Common myeloid progenitor, CD34-positive (primary cell): ENCODE measurements at regions of chr10 and their contacts with region 1.

Region 1: DNA sequence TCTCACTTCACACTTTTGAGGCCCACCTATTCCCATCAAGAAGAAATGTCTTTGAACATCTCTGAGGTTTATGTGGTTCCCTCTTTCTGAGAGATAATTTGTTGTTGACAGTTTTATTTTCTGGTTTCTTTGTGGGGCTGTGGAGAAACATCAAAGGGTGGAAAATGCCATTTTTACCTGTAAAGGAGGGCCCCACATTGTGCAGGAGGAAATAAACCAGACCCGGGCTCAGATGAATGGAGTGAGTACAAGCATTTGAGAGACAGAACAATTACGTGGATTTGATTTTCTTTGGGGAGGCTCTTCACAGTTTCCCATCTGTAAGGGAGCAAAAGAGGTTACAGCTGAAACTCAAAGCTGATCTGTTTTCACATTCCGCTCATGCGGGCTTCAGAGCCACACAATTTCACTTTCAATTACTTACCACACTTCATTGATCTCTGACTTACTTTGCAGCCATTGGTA is 29.8 kb downstream of the ITPRIP start:
- DNase-seq: no peak
- H3K4me3 ChIP-seq: no peak overlapping the region
- H3K27ac ChIP-seq: no peak overlapping the region
- H3K4me1 ChIP-seq: peaks cover 9 to 27% (median 20%) of the 10 kb centered on the region in 4 experiments
- H3K27me3 ChIP-seq: no peaks in the 10 kb centered on the region

Region 2: GRCh38 chr10:104291439-104291951 is 17.0 kb before region 1 on chr10:
- CTCF ChIA-PET with region 1: interaction called, 115 read pairs
- POLR2A ChIA-PET with region 1: no interaction called
- DNase-seq: peak; percentile 84 to 93 (median 91)
- H3K4me3 ChIP-seq: peak overlapping the region in 1 of 7 experiments; percentile 55
- H3K27ac ChIP-seq: no peak overlapping the region
- H3K4me1 ChIP-seq: peaks cover 0 to 17% (median 8%) of the 10 kb centered on the region in 4 experiments
- H3K27me3 ChIP-seq: no peaks in the 10 kb centered on the region

Region 3: GRCh38 chr10:104322416-104322782 is 13.9 kb after region 1 on chr10:
- CTCF ChIA-PET with region 1: interaction called, 55 read pairs
- POLR2A ChIA-PET with region 1: no interaction called
- DNase-seq: no peak
- H3K4me3 ChIP-seq: no peak overlapping the region
- H3K27ac ChIP-seq: no peak overlapping the region
- H3K4me1 ChIP-seq: peaks cover 14 to 88% (median 78%) of the 10 kb centered on the region in 4 experiments
- H3K27me3 ChIP-seq: no peaks in the 10 kb centered on the region

Region 4: GRCh38 chr10:104328896-104329710 is 20.6 kb after region 1 on chr10:
- CTCF ChIA-PET with region 1: interaction called, 27 read pairs
- POLR2A ChIA-PET with region 1: no interaction called
- DNase-seq: peak; percentile 54 to 89 (median 83)
- H3K4me3 ChIP-seq: peak overlapping the region in 6 of 7 experiments; percentile 25 to 70 (median 55)
- H3K27ac ChIP-seq: peak overlapping the region in 1 of 2 experiments; percentile 61
- H3K4me1 ChIP-seq: peaks cover 17 to 92% (median 79%) of the 10 kb centered on the region in 4 experiments
- H3K27me3 ChIP-seq: no peaks in the 10 kb centered on the region

Region 5: DNA sequence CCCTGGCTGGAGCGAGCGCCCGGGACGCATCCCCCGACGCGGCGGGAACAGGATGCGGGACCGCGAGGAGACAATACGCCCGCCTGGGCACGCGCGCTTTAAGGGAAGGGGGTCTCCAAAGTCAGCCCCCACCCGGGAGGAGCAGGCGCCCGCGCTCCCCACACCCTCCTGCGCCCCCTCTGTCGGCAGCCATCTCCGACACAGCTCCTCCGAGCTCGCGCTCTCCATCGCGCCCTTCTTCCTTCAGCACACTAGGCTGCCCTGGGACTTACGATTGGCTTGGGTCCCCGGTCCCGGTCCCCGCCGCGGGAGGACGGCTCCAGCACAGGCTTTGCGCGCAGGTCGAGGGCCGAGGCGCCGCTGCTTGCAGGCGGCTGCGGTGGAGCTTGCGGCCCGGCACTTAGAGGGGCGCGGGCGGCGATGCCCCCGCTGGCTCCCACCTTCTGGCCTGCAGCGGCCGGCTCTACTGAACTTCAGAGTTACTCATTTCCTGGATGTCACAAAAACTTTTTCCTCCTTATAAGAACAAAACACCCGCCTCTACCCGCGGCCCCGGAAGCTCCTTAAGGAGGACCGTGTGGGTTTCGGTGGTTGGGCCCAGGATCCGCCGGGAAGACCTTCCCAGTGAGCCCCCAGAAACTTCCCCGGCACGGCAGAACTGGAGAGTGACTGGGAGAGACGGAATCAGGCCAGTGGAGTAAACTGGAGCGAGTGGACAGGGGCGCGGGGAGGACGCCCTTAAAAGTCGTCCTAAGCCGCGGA is 29.7 kb after region 1 on chr10 and contains the start of gene ITPRIP:
- CTCF ChIA-PET with region 1: interaction called, 191 read pairs
- POLR2A ChIA-PET with region 1: no interaction called
- DNase-seq: peak; percentile 72 to 88 (median 81)
- H3K4me3 ChIP-seq: peak within 1 kb of the TSS; percentile 85 to 98 (median 91)
- H3K27ac ChIP-seq: peak within 1 kb of the TSS; percentile 86 to 96
- H3K4me1 ChIP-seq: peaks cover 21 to 47% (median 42%) of the 10 kb centered on the region in 4 experiments
- H3K27me3 ChIP-seq: no peaks in the 10 kb centered on the region

Region 6: DNA sequence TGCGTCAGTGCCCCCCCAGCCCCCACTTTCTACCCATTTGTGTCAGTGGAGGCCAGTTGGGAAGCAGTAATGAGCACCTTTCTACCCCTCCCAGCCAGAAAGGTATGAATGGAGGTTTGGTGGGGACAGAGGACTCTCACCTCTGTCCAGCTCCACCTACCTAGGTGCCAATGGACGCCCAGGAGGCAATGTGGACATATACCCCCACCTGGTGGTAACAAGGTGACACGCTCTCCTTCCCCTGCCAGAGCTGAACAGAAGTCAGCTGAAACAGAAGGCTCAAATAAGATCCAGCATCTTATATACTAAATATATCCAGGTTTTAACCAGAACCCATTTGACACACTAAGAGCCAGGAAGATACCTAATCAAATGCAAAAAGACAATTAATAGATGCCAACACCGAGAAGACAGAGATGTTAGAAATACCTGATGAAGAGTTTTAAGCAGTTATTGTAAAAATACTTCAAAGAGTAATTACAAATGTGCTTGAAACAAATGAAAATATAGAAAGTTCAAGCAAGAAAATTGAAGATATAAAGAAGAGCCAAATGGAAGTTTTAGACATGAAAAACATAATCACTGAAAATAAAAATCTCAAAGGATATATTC is 314.2 kb after region 1 on chr10:
- CTCF ChIA-PET with region 1: no interaction called
- POLR2A ChIA-PET with region 1: no interaction called
- DNase-seq: peak in 2 of 3 donors; percentile 35 to 39
- H3K4me3 ChIP-seq: no peak overlapping the region
- H3K27ac ChIP-seq: no peak overlapping the region
- H3K4me1 ChIP-seq: no peaks in the 10 kb centered on the region
- H3K27me3 ChIP-seq: peaks cover 0 to 6% (median 2%) of the 10 kb centered on the region in 5 experiments